AG04450 (cell line): ENCODE measurements at regions of chr6 and their contacts with region 1.

Region 1: GRCh38 chr6:71288228-71289001 is at the start of gene OGFRL1:
- DNase-seq: no peak
- H3K4me3 ChIP-seq: peak within 1 kb of the TSS; percentile 73
- H3K27ac ChIP-seq: no peak within 1 kb of the TSS
- H3K27me3 ChIP-seq: no peaks in the 10 kb centered on the region
- CTCF ChIP-seq: no peak
- polyA plus RNA-seq, gene OGFRL1: 12.8 and 16.6 TPM in 2 replicates

Region 2: GRCh38 chr6:71153755-71154325 is 134.6 kb before region 1 on chr6:
- CTCF ChIA-PET with region 1: no interaction called
- POLR2A ChIA-PET with region 1: no interaction called
- DNase-seq: no peak
- H3K4me3 ChIP-seq: no peak overlapping the region
- H3K27ac ChIP-seq: no peak overlapping the region
- H3K27me3 ChIP-seq: peaks cover 2% of the 10 kb centered on the region
- CTCF ChIP-seq: no peak

Region 3: DNA sequence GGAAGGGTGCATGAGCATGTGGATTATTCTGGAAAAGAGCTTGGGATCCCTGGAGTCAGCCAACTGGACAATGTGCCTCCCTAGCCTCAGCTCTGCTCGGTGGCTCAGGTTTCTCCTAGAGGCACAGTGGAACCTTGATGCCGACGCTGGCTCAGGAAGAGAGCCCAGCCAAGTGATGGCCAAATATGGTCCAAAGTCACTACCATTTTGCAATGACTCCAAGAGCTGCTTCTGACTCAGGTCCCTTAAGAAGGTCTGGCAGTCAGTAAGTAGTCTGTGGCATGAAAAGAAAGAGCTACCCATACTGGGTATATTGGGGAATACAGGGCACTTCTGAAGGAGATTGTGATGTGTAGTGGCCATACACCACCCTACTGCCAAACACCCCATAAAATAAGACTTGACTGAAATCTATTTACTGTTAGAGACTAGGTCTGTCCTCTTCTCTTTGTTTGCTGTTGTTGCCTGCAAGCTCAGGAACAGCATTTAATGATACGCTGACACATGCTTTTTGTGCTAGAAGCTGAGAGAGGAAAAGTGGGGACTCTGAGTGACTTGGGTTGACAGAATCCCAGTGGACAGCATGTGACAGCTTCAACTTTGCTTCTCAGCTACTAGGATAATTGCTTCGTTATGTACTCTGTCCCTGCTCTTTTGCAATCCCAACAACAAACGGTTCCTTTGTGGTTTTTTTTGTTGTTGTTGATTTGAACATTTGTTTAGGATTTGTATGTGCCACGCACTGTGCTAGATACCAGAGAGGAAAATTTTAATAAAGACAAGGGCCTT is 30.1 kb before region 1 on chr6:
- CTCF ChIA-PET with region 1: interaction called, 12 read pairs
- POLR2A ChIA-PET with region 1: no interaction called
- DNase-seq: no peak
- H3K4me3 ChIP-seq: no peak overlapping the region
- H3K27ac ChIP-seq: no peak overlapping the region
- H3K27me3 ChIP-seq: no peaks in the 10 kb centered on the region
- CTCF ChIP-seq: no peak